Activated naive CD4-positive, alpha-beta T cell treated with anti-CD3 and anti-CD28 coated beads for 36 hours (primary cell): ENCODE measurements at regions of chr1 and their contacts with region 1.

Region 1: DNA sequence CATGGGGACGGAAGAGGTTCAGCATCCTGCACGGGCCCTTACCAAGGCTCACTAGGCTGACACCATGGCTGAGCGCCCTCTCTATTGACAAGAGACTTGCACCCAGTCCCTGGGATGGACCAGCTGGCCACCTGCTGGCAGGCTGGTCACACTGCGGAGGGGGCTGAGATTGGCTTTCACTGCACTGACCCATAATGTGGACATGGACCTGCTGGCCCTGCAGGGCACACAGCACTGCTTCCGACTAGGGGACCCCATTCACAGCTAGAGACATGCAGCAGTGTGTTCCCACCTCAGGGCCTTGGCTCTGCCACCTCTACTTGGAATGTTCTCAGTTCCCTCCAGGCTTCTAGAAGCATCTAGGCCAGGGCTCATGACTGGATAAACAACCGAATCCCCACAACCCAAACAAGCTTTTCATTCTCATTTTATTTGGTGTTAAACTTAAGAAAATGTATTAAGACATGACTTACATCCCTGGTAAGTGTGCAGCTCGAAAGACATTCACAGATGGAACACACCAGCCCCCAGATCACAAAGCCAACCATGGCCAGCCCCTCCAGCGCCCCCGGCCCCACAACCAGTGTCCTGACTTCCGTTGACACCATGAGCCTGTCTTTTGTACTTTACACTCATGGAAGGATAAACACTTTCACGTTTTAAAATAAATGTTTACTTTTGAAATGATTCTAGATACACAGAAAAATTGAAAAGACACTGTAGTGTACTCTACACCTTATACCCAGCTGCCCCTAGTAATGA is 9.3 kb upstream of the SRARP start:
- DNase-seq: peak; percentile 68
- H3K4me3 Mint-ChIP-seq: no peak overlapping the region
- H3K27ac Mint-ChIP-seq: no peak overlapping the region
- H3K4me1 Mint-ChIP-seq: no peaks in the 10 kb centered on the region
- H3K27me3 Mint-ChIP-seq: no peaks in the 10 kb centered on the region

Region 2: DNA sequence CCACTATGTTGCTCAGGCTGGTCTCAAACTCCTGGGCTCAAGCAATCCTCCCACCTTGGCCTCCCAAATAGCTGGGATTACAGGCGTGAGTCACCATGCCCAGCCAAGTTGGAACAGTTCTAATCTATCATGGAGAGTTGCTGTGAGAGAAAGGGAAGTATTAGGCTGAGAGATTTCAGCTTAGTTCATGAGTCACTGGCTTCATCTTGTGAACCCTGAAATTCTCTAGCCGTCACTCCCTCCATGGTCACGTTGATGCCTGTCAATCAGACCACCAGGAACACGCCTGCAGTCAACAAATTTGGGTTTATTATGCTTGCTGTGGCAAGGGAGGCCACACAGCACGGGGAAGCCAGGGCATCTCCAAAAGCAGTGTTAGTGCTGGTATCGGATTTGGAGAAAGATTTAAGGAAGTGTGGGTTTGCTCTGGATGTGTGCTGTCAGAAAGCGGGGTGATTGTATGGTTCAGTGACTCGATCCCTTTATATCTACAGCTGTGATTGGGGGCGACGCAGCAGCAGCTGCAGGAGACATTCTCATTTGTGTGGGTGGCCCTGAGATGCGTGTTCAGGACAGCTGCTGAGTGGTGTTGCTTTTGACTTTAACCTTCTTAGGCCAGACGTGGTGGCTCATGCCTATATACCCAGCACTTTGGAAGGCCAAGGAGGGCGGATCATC is 206.0 kb before region 1 on chr1:
- CTCF ChIA-PET with region 1: interaction called, 9 read pairs
- intact Hi-C with region 1: loop called (anchors 1 kb)
- DNase-seq: no peak
- H3K4me3 Mint-ChIP-seq: no peak overlapping the region
- H3K27ac Mint-ChIP-seq: no peak overlapping the region
- H3K4me1 Mint-ChIP-seq: peaks cover 2% of the 10 kb centered on the region
- H3K27me3 Mint-ChIP-seq: no peaks in the 10 kb centered on the region

Region 3: DNA sequence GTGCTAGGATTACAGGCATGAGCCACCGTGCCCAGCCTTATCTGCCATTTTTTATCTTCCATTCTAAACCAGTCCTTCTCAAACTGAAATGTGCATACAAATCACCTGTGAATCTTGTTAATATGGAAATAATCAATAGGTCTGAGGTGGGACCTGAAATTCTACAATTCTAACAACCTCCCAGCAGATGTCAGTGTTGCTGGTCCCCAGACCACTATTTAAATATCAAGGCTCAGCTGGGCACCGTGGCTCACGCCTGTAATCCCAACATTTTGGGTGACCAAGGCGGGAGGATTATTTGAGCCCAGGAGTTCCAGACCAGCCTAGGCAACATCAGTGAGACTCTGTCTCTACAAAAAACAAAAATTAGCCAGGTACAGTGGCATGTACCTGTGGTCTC is 191.4 kb before region 1 on chr1:
- CTCF ChIA-PET with region 1: interaction called, 3 read pairs
- intact Hi-C with region 1: loop called (anchors 1 kb)
- DNase-seq: peak; percentile 32
- H3K4me3 Mint-ChIP-seq: no peak overlapping the region
- H3K27ac Mint-ChIP-seq: no peak overlapping the region
- H3K4me1 Mint-ChIP-seq: no peaks in the 10 kb centered on the region
- H3K27me3 Mint-ChIP-seq: no peaks in the 10 kb centered on the region